Left cardiac atrium (tissue), 4 donors: ENCODE measurements at regions of chr13 and their contacts with region 1.

Region 1: GRCh38 chr13:42110410-42111155 is 62.1 kb downstream of the DGKH start:
- DNase-seq: no peak
- ATAC-seq: peak; percentile 43 to 67

Region 2: DNA sequence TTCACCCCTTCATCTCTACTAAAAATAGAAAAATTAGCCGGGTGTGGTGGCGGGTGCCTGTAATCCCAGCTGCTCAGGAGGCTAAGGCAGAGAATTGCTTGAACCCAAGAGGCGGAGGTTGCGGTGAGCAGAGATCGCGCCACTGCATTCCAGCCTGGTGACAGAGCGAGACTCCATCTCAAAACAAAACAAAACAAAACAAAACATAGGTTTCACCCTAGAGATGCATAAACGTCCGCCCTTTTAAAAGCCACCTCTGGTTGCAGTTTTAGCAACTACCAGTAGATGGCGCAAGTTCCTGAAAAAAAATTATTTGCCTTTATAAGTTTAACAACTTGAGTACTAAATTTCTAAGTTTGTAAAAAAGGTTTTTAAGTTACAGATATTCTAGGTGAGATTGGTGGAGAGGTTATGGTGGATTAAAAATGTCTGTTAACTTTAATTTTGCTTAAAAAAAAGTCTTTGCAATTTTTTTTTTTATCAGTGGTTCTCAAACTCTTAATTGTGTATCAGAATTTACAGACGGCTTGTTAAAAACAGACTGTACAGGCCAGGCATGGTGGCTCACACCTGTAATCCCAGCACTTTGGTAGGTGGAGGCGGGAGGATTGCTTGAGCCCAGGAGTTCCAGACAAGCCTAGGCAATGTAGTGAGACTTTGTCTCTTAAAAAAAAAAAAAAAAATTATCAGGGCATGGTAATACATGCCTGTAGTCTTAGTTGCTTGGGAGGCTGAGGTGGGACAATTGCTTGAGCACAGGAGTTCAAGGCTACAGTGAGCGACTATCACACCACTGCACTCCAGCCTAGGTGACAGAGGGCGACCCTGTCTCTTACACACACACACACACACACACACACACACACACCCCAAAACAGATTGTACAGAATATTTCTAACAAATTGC is 757.4 kb before region 1 on chr13:
- intact Hi-C with region 1: loop called in 1 of 2 experiments (anchors 10 kb)
- DNase-seq: no peak
- ATAC-seq: peak; percentile 36 to 37

Region 3: DNA sequence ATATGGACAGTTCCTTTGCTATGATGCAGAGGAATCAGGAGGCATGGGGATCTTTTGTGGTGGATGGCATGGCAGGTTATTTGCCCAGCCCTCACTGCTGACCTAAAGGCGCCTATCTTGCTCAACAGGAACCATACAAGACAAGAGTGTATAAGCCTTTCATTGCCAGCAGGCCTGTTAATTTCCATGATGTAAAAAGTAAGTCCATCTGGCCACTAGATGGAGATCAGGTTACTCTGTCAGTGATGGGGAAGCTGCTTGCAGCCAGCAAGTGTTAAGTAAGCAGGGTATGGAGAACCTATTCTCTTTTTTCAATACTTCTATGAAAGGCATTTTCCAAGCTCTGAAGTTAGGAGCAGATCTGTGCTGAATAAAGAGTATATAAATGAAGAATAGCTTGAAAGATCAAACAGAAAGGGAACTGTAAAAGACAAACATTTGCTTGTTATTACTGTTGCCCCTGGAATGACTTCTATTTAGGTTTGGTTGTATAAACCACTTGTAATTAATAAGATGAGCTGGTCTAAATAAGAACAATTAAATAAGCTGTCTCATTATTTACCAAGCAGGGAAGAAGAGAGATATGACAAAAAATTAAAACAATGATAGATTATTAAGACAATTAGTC is 442.3 kb before region 1 on chr13:
- intact Hi-C with region 1: loop called (anchors 5 to 10 kb)
- DNase-seq: peak; percentile 31
- ATAC-seq: peak; percentile 96 to 97

Region 4: DNA sequence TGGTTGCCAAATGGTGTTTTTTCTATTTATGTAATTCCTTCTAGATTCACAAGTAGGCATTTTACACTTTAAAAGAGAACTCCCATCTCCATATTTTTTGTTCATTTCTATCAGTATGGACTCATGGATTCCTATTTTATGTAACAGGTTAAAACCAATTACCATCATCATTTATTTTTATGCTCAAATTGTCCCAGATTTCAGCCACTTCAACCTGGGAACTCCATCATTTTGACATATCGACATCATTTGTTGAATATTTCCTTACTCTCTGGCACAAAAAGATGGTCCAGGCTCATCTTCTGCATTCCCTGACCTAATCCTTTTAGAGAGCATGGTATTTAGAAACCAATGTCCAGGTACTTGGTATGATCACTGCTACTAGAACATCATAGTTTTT is 229.6 kb before region 1 on chr13:
- intact Hi-C with region 1: loop called in 1 of 2 experiments (anchors 10 kb)
- DNase-seq: no peak
- ATAC-seq: no peak

Region 5: GRCh38 chr13:42333613-42334328 is 223.2 kb after region 1 on chr13:
- intact Hi-C with region 1: no loop called
- DNase-seq: no peak
- ATAC-seq: peak in 1 of 2 donors; percentile 27